Posterior vena cava (tissue), 2 donors: ENCODE measurements at regions of chr2 and their contacts with region 1.

Region 1: DNA sequence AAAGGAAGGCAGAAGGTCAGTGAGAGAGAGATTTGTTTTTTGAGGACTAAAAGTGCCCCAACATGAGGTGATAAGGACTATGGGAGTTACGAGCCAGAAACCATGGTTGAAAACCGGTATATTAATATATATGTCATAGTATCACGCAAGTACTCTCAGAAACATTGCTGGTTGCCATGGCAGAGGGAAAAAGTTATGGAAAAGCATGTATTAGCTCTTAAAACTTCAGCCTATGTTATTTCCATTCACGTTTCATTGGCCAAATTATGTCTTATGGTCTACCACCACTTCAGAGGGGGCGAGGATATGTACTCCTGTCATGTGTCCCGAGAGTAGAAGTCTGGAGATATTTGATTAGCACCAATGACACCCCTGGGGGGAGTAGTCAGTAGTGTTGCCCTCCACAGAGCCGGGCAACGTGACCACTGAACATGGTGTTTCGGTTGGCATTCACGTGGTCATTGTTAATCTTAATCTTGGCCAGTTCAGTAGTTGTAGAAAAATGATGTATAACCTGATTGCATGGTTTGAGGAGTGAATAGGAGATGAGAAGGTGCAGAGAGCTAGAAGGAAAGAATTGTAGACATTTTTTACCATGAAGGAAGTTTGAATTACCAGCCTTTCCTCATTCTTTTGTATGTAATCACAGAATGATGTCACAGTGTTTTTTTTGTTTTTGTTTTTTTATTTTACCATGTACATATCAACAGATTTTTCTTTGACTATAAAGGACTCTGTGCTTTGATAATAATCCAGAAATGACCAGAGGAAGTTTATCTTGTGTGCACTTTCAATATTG is 126.1 kb downstream of the LTBP1 start:
- DNase-seq: no peak

Region 2: DNA sequence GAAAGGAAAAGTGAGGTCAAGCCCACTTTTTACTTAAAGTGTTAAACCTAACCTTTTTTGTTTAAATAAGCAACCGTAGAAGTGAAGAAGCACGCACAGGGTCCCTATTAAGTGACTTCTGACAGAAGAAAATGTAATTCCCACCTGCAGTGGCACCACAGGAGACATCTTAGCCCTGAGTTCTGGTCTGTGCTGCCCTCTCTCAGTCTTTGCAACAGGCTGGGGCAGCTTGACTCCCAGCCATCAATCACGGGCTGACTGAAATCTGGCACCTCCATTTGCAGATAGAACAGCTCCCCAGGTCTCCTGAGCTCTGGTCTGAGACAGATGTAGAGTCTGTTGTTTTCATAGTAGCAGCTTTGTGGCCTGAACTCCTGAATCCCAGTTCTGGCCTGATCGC is 44.0 kb after region 1 on chr2:
- intact Hi-C with region 1: loop called in 1 of 2 experiments (anchors 2 kb)
- DNase-seq: no peak

Region 3: GRCh38 chr2:33372940-33373553 is 300.2 kb after region 1 on chr2:
- intact Hi-C with region 1: no loop called
- DNase-seq: no peak